ENCODE measurements at regions of chr12 and their contacts with region 1.

Region 1: GRCh38 chr12:68317047-68317667 is 15.0 kb downstream of the MDM1 start:
- DNase-seq: peak in 2 of 4 donors; percentile 35 to 65
- ATAC-seq: peak; percentile 48
- H3K4me3 ChIP-seq: no peak overlapping the region
- H3K27ac ChIP-seq: no peak overlapping the region
- H3K4me1 ChIP-seq: no peaks in the 10 kb centered on the region
- H3K27me3 ChIP-seq: no peaks in the 10 kb centered on the region
- CTCF ChIP-seq: peak; percentile 52 to 55

Region 2: GRCh38 chr12:68031881-68032739 is 285.0 kb before region 1 on chr12:
- intact Hi-C with region 1: loop called in 1 of 2 experiments (anchors 10 kb)
- DNase-seq: no peak
- ATAC-seq: no peak
- H3K4me3 ChIP-seq: no peak overlapping the region
- H3K27ac ChIP-seq: no peak overlapping the region
- H3K4me1 ChIP-seq: no peaks in the 10 kb centered on the region
- H3K27me3 ChIP-seq: no peaks in the 10 kb centered on the region
- CTCF ChIP-seq: no peak

Region 3: GRCh38 chr12:68223083-68223747 is 93.9 kb before region 1 on chr12:
- intact Hi-C with region 1: loop called in 1 of 2 experiments (anchors 5 kb)
- DNase-seq: peak; percentile 70 to 90 (median 79)
- ATAC-seq: peak; percentile 100
- H3K4me3 ChIP-seq: no peak overlapping the region
- H3K27ac ChIP-seq: no peak overlapping the region
- H3K4me1 ChIP-seq: peaks cover 0 to 10% of the 10 kb centered on the region in 2 donors
- H3K27me3 ChIP-seq: peaks cover 6 to 11% of the 10 kb centered on the region in 2 donors
- CTCF ChIP-seq: peak; percentile 74 to 77

Region 4: GRCh38 chr12:68236421-68237059 is 80.6 kb before region 1 on chr12:
- intact Hi-C with region 1: loop called in 1 of 2 experiments (anchors 5 kb)
- DNase-seq: no peak
- ATAC-seq: peak; percentile 74
- H3K4me3 ChIP-seq: peak overlapping the region; percentile 1 to 31
- H3K27ac ChIP-seq: peak overlapping the region in 1 of 2 donors; percentile 31
- H3K4me1 ChIP-seq: peaks cover 0 to 24% of the 10 kb centered on the region in 2 donors
- H3K27me3 ChIP-seq: no peaks in the 10 kb centered on the region
- CTCF ChIP-seq: peak; percentile 7 to 8

Measured in left lung (tissue), 14 donors.